ENCODE measurements at regions of chr11 and their contacts with region 1.

Region 1: GRCh38 chr11:75204685-75205563 is 35.6 kb upstream of the TPBGL start:
- DNase-seq: peak; percentile 88
- CTCF ChIP-seq: peak; percentile 92

Region 2: DNA sequence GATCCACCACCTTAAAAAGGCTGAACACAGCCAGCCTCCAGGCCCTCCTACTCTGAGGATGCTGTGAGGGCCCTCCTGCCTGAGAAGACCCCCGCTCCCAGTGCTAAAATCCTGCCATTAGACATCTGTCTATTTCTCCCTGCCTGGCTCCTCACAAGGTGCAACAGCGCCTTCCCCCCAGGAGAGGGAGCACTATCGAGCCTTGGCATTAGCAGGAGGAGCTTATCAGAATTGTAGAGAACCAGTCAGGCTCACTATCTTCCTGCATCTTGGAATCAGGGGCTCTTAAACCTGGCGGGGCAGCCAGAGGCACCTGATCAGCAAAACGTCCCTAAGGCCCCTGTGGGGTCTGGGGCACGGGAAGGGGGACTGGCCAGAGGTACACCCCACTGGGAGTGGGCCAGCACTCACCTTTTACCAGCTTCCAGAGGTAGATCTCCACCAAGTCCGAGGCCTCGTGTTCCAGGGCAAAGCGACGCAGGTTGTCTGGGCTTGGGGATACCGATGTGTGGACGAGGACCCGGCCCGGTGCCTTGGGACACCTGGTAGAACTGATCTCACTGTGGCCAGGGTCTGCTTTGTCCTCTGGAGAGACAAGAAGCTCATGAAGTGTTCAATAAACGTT is 502.4 kb before region 1 on chr11:
- CTCF ChIA-PET with region 1: no interaction called
- POLR2A ChIA-PET with region 1: no interaction called
- DNase-seq: peak; percentile 83
- CTCF ChIP-seq: peak; percentile 94

Region 3: GRCh38 chr11:74929431-74930363 is 275.2 kb before region 1 on chr11:
- CTCF ChIA-PET with region 1: interaction called, 52 read pairs
- POLR2A ChIA-PET with region 1: no interaction called
- DNase-seq: peak; percentile 54
- CTCF ChIP-seq: peak; percentile 90

Region 4: DNA sequence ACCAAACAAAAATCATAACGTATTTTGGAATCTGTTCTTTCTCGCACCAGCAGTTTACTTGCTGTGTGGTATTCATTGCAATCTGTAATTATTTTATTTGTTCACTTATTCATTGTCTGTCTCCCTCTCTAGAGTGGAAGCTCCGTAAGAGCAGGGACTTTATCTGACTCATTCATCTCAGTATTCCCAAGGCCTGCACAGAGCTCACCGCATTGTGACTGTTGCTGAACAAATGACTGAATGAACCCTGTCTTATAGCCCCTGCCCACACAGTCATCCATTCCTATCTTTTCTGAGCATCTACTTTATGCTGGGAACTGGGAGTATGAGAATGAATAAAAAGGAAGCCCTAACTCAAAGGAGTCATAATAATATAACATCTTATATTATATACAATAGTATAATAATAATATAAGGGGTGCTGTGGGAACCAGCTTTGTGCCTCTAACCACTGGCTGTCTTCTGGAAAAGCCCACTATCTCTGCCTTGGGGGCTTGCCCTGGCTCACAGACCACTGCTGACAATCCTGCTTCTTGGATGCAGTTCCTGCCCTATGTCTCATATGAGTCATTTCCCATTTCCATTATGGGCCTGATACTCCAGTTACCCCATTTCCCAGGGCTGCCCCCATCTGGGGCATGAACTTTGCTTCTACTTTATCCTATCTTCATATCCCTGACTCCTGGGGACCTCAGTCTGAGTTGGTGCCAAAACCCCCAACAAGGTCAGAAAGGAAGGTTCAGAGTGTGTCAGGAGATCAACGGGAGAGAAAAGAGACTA is 267.0 kb before region 1 on chr11:
- CTCF ChIA-PET with region 1: interaction called, 14 read pairs
- POLR2A ChIA-PET with region 1: no interaction called
- DNase-seq: no peak
- CTCF ChIP-seq: no peak

Region 5: GRCh38 chr11:75022759-75023396 is 182.0 kb before region 1 on chr11:
- CTCF ChIA-PET with region 1: interaction called, 98 read pairs
- POLR2A ChIA-PET with region 1: no interaction called
- DNase-seq: peak; percentile 83
- CTCF ChIP-seq: peak; percentile 97

Region 6: GRCh38 chr11:75133976-75134375 is 70.9 kb before region 1 on chr11:
- CTCF ChIA-PET with region 1: interaction called, 301 read pairs
- POLR2A ChIA-PET with region 1: no interaction called
- DNase-seq: no peak
- CTCF ChIP-seq: no peak

Region 7: GRCh38 chr11:75167617-75168016 is 37.3 kb before region 1 on chr11:
- CTCF ChIA-PET with region 1: interaction called, 14 read pairs
- POLR2A ChIA-PET with region 1: no interaction called
- DNase-seq: no peak
- CTCF ChIP-seq: no peak

Region 8: GRCh38 chr11:75233742-75234172 is 28.8 kb after region 1 on chr11:
- CTCF ChIA-PET with region 1: interaction called, 30 read pairs
- POLR2A ChIA-PET with region 1: no interaction called
- DNase-seq: no peak
- CTCF ChIP-seq: no peak

Region 9: DNA sequence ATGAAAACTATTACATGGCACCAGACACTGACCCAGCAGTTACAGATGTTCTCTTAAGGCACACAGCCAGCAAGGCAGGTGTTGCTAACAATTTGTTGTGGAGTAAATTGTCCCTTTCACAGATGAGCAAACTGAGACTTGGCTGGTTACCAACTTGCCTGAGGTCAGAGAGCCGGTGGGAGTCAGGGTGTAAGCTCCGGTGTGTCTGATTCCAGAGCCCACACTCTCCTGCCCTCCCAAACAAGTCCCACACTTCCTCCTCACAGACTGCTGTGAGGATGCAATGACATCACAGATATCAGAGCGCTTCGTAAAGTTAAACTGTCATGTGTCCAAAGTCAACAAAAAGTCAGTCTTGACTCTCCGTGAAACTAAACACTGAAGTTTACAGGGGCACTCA is 308.3 kb after region 1 on chr11:
- CTCF ChIA-PET with region 1: no interaction called
- POLR2A ChIA-PET with region 1: no interaction called
- DNase-seq: no peak
- CTCF ChIP-seq: no peak